Activated CD4-positive, alpha-beta T cell treated with anti-CD3 and anti-CD28 coated beads, Interleukin-2, amount 10 ng/mL, durations not matched to agents 7 days and 5 days (primary cell): ENCODE measurements at regions of chr3 and their contacts with region 1.

Region 1: GRCh38 chr3:71444028-71444860 is 139.3 kb downstream of the FOXP1 start:
- DNase-seq: peak; percentile 88
- H3K4me3 Mint-ChIP-seq: peak overlapping the region; percentile 61
- H3K27ac Mint-ChIP-seq: peak overlapping the region; percentile 99
- H3K4me1 Mint-ChIP-seq: peaks cover 92% of the 10 kb centered on the region
- H3K27me3 Mint-ChIP-seq: no peaks in the 10 kb centered on the region

Region 2: DNA sequence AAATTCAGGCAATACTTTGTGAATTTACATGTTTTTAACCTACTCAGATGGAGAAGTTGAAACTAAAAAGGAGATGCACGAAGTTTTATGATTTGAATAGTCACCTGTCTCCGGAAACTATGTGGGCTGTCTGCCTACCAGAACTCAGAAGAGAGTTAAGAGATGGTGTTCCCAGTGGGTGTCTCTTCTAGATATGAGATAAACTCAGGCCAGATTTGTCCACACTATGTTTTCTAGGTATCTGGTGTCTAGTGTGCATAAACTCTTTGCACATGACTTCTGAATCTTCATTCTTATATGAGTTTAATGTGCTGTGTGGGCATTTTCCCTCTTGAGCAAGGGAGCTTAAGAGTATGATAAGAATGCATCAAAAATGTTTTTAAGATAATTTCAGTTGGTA is 83.5 kb before region 1 on chr3:
- CTCF ChIA-PET with region 1: interaction called, 10 read pairs
- POLR2A ChIA-PET with region 1: no interaction called
- DNase-seq: peak; percentile 17
- H3K4me3 Mint-ChIP-seq: peak overlapping the region; percentile 33
- H3K27ac Mint-ChIP-seq: peak overlapping the region; percentile 73
- H3K4me1 Mint-ChIP-seq: peaks cover 50% of the 10 kb centered on the region
- H3K27me3 Mint-ChIP-seq: peaks cover 6% of the 10 kb centered on the region

Region 3: DNA sequence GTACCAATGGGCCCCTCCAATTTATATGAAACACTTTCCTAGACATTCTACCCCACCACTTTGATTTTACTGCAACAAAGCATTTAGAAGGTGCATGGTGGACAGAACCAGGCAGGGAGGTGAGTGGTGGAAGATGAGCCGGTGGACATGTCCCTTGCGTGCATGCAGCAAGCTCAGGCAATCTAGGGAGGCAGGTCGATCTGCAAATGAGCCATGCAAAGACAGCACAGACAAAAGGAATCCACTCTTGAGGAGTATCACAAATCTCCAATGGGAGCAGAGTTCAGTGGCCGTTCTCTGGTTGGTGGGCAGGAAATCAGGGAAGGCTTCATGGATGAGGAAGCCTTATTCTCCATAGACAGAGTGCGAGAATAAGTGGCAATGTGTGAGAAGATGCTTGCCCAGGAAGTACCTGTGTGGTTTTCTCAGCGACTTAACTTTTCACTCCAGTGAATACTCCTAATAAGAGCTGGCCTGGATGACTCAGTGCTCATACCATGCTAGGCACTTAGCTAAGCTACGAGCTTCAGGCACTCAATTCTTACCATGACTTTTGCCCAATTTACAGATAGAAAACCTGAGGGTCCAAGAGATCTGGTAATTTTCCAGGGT is 13.2 kb before region 1 on chr3:
- CTCF ChIA-PET with region 1: interaction called, 14 read pairs
- POLR2A ChIA-PET with region 1: no interaction called
- DNase-seq: no peak
- H3K4me3 Mint-ChIP-seq: no peak overlapping the region
- H3K27ac Mint-ChIP-seq: no peak overlapping the region
- H3K4me1 Mint-ChIP-seq: peaks cover 78% of the 10 kb centered on the region
- H3K27me3 Mint-ChIP-seq: peaks cover 3% of the 10 kb centered on the region

Region 4: DNA sequence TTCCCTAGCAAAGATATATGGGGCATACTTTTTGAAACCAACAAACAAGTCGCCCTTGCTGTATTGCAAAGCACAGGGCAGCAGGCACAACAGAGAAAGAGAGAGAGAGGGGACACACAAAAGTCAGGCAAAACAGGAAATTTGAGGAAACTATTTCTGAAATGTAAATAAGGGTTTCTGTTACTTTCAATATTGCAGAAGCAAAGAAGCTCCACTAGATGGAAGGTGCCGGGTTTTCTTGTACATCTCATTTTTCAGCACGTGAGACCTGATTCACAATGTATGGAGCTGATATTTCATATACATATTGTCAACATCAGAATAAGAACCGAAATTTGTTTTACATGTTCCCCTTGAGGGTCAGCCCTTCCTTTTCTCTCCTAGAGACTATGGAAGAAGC is 11.9 kb after region 1 on chr3:
- CTCF ChIA-PET with region 1: interaction called, 14 read pairs
- POLR2A ChIA-PET with region 1: no interaction called
- DNase-seq: peak; percentile 33
- H3K4me3 Mint-ChIP-seq: peak overlapping the region; percentile 37
- H3K27ac Mint-ChIP-seq: peak overlapping the region; percentile 95
- H3K4me1 Mint-ChIP-seq: peaks cover 74% of the 10 kb centered on the region
- H3K27me3 Mint-ChIP-seq: peaks cover 3% of the 10 kb centered on the region

Region 5: DNA sequence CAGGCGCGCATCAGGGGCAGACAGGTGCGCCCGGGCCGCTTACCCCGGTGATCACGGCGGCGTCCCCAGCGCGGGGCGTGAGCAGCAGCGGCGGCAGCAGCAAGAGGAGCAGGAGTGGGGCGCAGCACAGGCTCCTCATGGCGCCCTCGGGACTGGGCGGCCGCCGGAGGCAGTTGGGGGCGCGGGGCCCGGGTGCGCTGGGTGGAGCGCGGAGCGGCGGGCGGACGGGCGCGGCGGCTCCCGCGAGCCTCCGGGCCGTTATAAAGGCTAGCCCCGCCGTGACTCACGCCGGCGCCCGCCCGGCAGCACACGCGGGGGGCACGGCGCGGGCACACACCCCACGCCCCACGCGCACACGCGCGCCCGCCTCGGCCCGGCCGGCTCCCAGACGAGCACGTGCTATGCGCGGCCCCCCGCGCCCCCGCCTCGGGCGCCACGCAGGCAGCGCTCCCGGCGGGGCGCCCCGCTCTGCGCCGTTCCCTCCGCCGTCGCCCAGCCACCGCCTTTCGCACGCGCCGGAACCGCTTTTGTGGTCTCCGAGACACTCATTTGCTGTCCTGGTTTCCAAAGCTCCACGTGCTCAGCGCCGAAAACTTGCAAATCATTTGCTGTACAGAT is 340.8 kb after region 1 on chr3 and contains the start of gene PROK2:
- CTCF ChIA-PET with region 1: no interaction called
- POLR2A ChIA-PET with region 1: no interaction called
- DNase-seq: peak; percentile 26
- H3K4me3 Mint-ChIP-seq: peak within 1 kb of the TSS; percentile 70
- H3K27ac Mint-ChIP-seq: peak within 1 kb of the TSS; percentile 36
- H3K4me1 Mint-ChIP-seq: peaks cover 25% of the 10 kb centered on the region
- H3K27me3 Mint-ChIP-seq: peaks cover 62% of the 10 kb centered on the region
- total RNA-seq, gene PROK2: 0.60 to 0.98 TPM